Posterior vena cava (tissue), 2 donors: ENCODE measurements at regions of chr6 and their contacts with region 1.

Region 1: GRCh38 chr6:118083711-118084110 is 176.6 kb downstream of the SLC35F1 start:
- DNase-seq: no peak

Region 2: DNA sequence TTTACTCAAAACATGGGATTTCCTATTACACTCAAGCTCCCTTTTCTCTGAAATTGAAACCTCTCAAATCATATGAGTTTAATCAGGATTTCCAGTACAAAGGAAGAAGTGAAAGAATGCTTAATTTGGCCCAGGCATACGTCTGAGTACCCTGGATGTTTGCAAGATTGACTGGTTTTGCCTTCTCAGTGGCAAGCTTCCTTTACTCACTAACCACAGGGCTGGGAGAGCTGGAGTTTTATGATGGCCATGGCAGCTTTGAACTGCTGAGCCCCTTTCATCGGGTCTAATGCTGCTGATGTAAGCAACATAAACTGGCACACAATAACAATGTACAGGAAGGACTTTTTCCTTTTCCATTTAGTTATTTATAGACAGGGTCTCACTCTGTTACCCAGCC is 18.1 kb after region 1 on chr6:
- intact Hi-C with region 1: loop called in 1 of 2 experiments (anchors 1 kb)
- DNase-seq: no peak